HepG2 (cell line): ENCODE measurements at regions of chr2 and their contacts with region 1.

Region 1: GRCh38 chr2:113124181-113124961 is 3.0 kb upstream of the IL1RN start:
- DNase-seq: peak; percentile 23
- ATAC-seq: no peak
- H3K4me3 ChIP-seq: no peak overlapping the region
- H3K27ac ChIP-seq: peak overlapping the region; percentile 92
- H3K4me1 ChIP-seq: peaks cover 80% of the 10 kb centered on the region
- H3K27me3 ChIP-seq: peaks cover 0 to 6% of the 10 kb centered on the region in 2 experiments; a peak in 2 of 5 replicates
- CTCF ChIP-seq: no peak
- EP300 ChIP-seq: no peak
- POLR2A ChIP-seq: no peak
- RAD21 ChIP-seq: no peak

Region 2: GRCh38 chr2:113080134-113080533 is 44.2 kb before region 1 on chr2:
- CTCF ChIA-PET with region 1: no interaction called
- POLR2A ChIA-PET with region 1: interaction called, 8 read pairs
- in situ Hi-C with region 1: no loop called
- intact Hi-C with region 1: loop called (anchors 2 kb)
- DNase-seq: peak; percentile 40
- ATAC-seq: peak; percentile 93
- H3K4me3 ChIP-seq: no peak overlapping the region
- H3K27ac ChIP-seq: no peak overlapping the region
- H3K4me1 ChIP-seq: peaks cover 14% of the 10 kb centered on the region; the same call in 1 of the 2 replicates
- H3K27me3 ChIP-seq: peaks cover 0 to 10% of the 10 kb centered on the region in 2 experiments; a peak in 2 of 5 replicates
- CTCF ChIP-seq: peak; percentile 98
- EP300 ChIP-seq: no peak
- POLR2A ChIP-seq: no peak
- RAD21 ChIP-seq: peak; percentile 91

Region 3: DNA sequence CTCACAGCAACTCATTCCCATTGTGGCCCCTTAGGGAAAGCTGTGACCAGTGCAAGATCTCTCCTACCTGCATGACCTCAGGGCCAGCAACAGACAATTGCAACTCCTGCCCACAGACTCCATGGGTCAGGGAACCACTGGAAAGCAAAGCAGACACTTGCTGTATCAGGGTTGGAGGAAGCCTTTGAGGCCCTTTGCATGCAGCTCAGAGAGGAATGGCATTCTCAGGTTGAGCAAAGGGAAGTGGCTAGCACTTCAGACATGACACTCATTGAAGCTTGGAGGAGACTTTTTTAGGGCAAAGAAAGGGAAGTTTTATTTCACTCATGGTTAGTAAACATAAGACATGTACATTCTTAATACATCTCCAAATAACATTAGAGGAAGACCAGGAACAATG is 34.5 kb before region 1 on chr2:
- CTCF ChIA-PET with region 1: no interaction called
- POLR2A ChIA-PET with region 1: interaction called, 45 read pairs
- in situ Hi-C with region 1: no loop called
- intact Hi-C with region 1: loop called (anchors 1 kb)
- DNase-seq: no peak
- ATAC-seq: no peak
- H3K4me3 ChIP-seq: no peak overlapping the region
- H3K27ac ChIP-seq: no peak overlapping the region
- H3K4me1 ChIP-seq: peaks cover 38% of the 10 kb centered on the region
- H3K27me3 ChIP-seq: no peaks in the 10 kb centered on the region; a peak in 1 of 5 replicates
- CTCF ChIP-seq: no peak
- EP300 ChIP-seq: no peak
- POLR2A ChIP-seq: no peak
- RAD21 ChIP-seq: no peak

Region 4: GRCh38 chr2:113157118-113157896 is 32.9 kb after region 1 on chr2:
- CTCF ChIA-PET with region 1: no interaction called
- POLR2A ChIA-PET with region 1: interaction called, 14 read pairs
- in situ Hi-C with region 1: no loop called
- intact Hi-C with region 1: no loop called
- DNase-seq: no peak
- ATAC-seq: peak; percentile 81
- H3K4me3 ChIP-seq: peak overlapping the region; percentile 56 to 82 (median 69)
- H3K27ac ChIP-seq: peak overlapping the region; percentile 64
- H3K4me1 ChIP-seq: peaks cover 43% of the 10 kb centered on the region
- H3K27me3 ChIP-seq: no peaks in the 10 kb centered on the region; a peak in 1 of 5 replicates
- CTCF ChIP-seq: peak; percentile 12; the same call in 1 of the 2 replicates
- EP300 ChIP-seq: no peak
- POLR2A ChIP-seq: peak in 1 of 2 experiments; percentile 59; a peak in 1 of 4 replicates
- RAD21 ChIP-seq: no peak